Common myeloid progenitor, CD34-positive (primary cell): ENCODE measurements at regions of chr16 and their contacts with region 1.

Region 1: GRCh38 chr16:50671644-50672260 is 9.4 kb downstream of the SNX20 start:
- DNase-seq: peak; percentile 66 to 80 (median 74)
- H3K4me3 ChIP-seq: no peak overlapping the region
- H3K27ac ChIP-seq: no peak overlapping the region
- H3K4me1 ChIP-seq: peaks cover 8 to 36% (median 34%) of the 10 kb centered on the region in 4 experiments
- H3K27me3 ChIP-seq: no peaks in the 10 kb centered on the region

Region 2: DNA sequence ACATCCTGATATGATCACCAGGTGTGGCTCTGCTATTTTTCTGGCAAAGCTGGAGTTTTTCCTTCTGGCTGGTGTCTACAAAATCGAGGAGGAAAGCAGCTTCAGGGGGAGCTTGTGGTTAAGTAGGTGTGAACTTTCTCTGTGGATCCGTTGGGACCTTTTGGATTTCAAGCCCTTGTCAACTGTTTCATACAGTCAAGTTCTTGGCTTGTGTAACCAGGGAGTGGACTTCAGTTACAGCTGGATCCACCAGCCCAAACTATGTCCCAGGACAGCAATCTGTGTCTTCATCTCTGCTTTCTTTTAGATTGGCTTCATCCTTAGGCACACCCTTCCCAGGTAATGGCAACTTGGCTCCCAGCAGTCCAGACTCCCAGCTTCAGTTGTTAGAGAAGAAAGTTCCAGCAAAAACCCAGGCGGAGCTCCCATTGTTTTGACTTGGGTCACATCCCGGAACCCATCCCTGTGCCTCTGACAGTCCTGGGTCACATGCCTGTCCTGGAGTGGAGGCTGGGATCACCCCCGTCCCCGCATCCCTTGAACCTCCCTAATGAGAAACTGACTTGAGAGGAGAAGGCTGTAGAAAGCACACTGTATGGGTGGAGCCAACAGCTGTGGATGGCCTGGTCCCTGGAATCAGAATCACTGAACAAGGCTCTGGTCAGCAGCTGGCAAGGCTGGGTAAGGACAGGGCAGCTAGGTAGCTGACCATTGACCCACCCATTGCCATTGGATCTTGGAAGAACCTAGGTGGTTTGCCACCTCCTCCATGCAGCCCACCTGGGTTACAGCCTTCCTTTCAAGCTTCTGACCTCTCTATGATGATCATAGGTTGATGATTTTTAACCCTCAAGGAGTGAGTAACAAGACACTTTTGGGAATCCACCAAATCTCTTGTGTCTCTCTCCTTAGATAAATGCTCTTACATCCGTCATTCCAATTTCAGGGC is 105.5 kb before region 1 on chr16:
- CTCF ChIA-PET with region 1: no interaction called
- POLR2A ChIA-PET with region 1: no interaction called
- DNase-seq: no peak
- H3K4me3 ChIP-seq: no peak overlapping the region
- H3K27ac ChIP-seq: no peak overlapping the region
- H3K4me1 ChIP-seq: peaks cover 0 to 8% (median 1%) of the 10 kb centered on the region in 4 experiments
- H3K27me3 ChIP-seq: no peaks in the 10 kb centered on the region

Region 3: GRCh38 chr16:50806099-50807062 is 134.6 kb after region 1 on chr16:
- CTCF ChIA-PET with region 1: interaction called, 37 read pairs
- POLR2A ChIA-PET with region 1: no interaction called
- DNase-seq: peak; percentile 91 to 96 (median 94)
- H3K4me3 ChIP-seq: peak overlapping the region; percentile 8 to 79 (median 45)
- H3K27ac ChIP-seq: no peak overlapping the region
- H3K4me1 ChIP-seq: peaks cover 0 to 10% (median 7%) of the 10 kb centered on the region in 4 experiments
- H3K27me3 ChIP-seq: peaks cover 0 to 2% (median 0%) of the 10 kb centered on the region in 5 experiments